ENCODE measurements at regions of chr12 and their contacts with region 1.

Region 1: DNA sequence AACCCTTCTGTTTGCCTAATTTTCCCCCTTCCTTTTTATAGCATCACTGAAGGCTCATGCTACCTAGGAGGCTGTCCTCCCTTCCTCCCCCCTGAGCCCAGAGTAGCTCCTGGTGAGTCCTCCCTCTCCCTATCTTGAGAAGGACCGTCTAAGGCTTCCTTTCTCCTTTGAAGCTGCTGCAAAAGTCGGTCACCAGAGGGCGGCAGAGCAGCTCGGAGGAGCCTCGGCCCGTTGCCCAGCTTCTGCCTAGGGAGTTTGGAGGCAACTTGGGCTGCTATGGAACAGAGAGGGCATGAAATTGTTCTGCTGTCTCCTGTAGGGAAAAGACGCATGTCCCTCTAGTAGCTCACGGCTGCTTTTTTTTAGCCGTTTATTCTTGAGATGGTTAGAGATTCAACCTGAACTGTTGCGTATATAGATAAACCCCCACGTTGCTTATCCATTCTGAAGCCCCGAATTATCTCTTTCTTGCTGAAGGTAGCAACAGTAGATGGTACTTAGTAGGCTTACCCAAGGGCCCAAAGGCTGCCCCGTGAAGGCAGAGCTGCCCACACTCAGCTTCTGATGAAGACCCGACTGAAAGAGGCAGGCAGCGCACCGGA is 5.7 kb downstream of the WNT5B start:
- DNase-seq: peak; percentile 18 to 71 (median 64)
- ATAC-seq: peak; percentile 52
- H3K4me3 ChIP-seq: no peak overlapping the region
- H3K4me3 Mint-ChIP-seq: no peak overlapping the region
- H3K27ac ChIP-seq: no peak overlapping the region
- H3K27ac Mint-ChIP-seq: no peak overlapping the region
- H3K4me1 ChIP-seq: peaks cover 13% of the 10 kb centered on the region
- H3K4me1 Mint-ChIP-seq: peaks cover 13% of the 10 kb centered on the region
- H3K27me3 ChIP-seq: peaks cover 12 to 21% of the 10 kb centered on the region in 2 experiments
- H3K27me3 Mint-ChIP-seq: peaks cover 42% of the 10 kb centered on the region
- CTCF ChIP-seq: peak; percentile 70

Region 2: GRCh38 chr12:1611803-1612572 is 22.7 kb before region 1 on chr12:
- CTCF ChIA-PET with region 1: interaction called, 11 read pairs
- POLR2A ChIA-PET with region 1: no interaction called
- intact Hi-C with region 1: no loop called
- DNase-seq: no peak
- ATAC-seq: no peak
- H3K4me3 ChIP-seq: no peak overlapping the region
- H3K4me3 Mint-ChIP-seq: no peak overlapping the region
- H3K27ac ChIP-seq: no peak overlapping the region
- H3K27ac Mint-ChIP-seq: no peak overlapping the region
- H3K4me1 ChIP-seq: peaks cover 4% of the 10 kb centered on the region
- H3K4me1 Mint-ChIP-seq: peaks cover 3% of the 10 kb centered on the region
- H3K27me3 ChIP-seq: no peaks in the 10 kb centered on the region
- H3K27me3 Mint-ChIP-seq: peaks cover 4% of the 10 kb centered on the region
- CTCF ChIP-seq: no peak

Region 3: DNA sequence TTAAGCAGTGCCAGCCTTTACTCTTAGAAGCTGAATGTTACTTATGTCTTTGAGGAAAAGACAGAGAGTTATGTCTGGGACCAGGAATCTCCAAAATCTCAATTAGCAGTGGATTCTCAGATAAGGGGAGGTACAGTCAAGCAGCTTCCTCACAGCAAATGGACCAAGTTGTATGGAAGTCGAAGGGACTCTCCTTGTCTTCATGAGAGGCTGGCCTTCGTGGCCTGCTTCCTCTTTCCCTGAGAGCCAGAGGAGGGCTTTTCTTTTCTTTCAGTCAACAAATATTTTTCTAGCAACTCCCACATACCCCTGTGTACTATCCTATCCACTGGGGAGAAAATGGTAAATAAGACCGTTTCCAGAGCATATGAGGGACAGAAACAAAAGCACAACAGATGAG is 12.3 kb before region 1 on chr12:
- CTCF ChIA-PET with region 1: interaction called, 15 read pairs
- POLR2A ChIA-PET with region 1: no interaction called
- intact Hi-C with region 1: no loop called
- DNase-seq: no peak
- ATAC-seq: no peak
- H3K4me3 ChIP-seq: no peak overlapping the region
- H3K4me3 Mint-ChIP-seq: no peak overlapping the region
- H3K27ac ChIP-seq: no peak overlapping the region
- H3K27ac Mint-ChIP-seq: no peak overlapping the region
- H3K4me1 ChIP-seq: no peaks in the 10 kb centered on the region
- H3K4me1 Mint-ChIP-seq: no peaks in the 10 kb centered on the region
- H3K27me3 ChIP-seq: no peaks in the 10 kb centered on the region
- H3K27me3 Mint-ChIP-seq: peaks cover 16% of the 10 kb centered on the region
- CTCF ChIP-seq: no peak

Region 4: GRCh38 chr12:2583091-2583497 is 948.4 kb after region 1 on chr12:
- CTCF ChIA-PET with region 1: no interaction called
- POLR2A ChIA-PET with region 1: no interaction called
- intact Hi-C with region 1: loop called in 1 of 2 experiments (anchors 10 kb)
- DNase-seq: peak in 7 of 9 experiments; percentile 13 to 56 (median 37)
- ATAC-seq: no peak
- H3K4me3 ChIP-seq: no peak overlapping the region
- H3K4me3 Mint-ChIP-seq: no peak overlapping the region
- H3K27ac ChIP-seq: no peak overlapping the region
- H3K27ac Mint-ChIP-seq: no peak overlapping the region
- H3K4me1 ChIP-seq: peaks cover 4% of the 10 kb centered on the region
- H3K4me1 Mint-ChIP-seq: peaks cover 3% of the 10 kb centered on the region
- H3K27me3 ChIP-seq: peaks cover 2 to 7% of the 10 kb centered on the region in 2 experiments
- H3K27me3 Mint-ChIP-seq: peaks cover 47% of the 10 kb centered on the region
- CTCF ChIP-seq: peak; percentile 29

Measured in CD8-positive, alpha-beta T cell (primary cell).